ENCODE measurements at regions of chr7 and their contacts with region 1.

Region 1: GRCh38 chr7:46115410-46115809 is 194.3 kb upstream of the IGFBP3 start:
- DNase-seq: no peak
- ATAC-seq: peak in 3 of 4 donors; percentile 36 to 66 (median 62)
- H3K4me3 ChIP-seq: no peak overlapping the region
- H3K27ac ChIP-seq: no peak overlapping the region
- H3K4me1 ChIP-seq: no peaks in the 10 kb centered on the region
- H3K27me3 ChIP-seq: no peaks in the 10 kb centered on the region
- CTCF ChIP-seq: no peak
- POLR2A ChIP-seq: no peak

Region 2: GRCh38 chr7:45663167-45663921 is 452.1 kb before region 1 on chr7:
- intact Hi-C with region 1: no loop called
- DNase-seq: peak in 2 of 5 donors; percentile 26 to 73
- ATAC-seq: peak in 3 of 4 donors; percentile 61 to 68 (median 66)
- H3K4me3 ChIP-seq: no peak overlapping the region
- H3K27ac ChIP-seq: no peak overlapping the region
- H3K4me1 ChIP-seq: no peaks in the 10 kb centered on the region
- H3K27me3 ChIP-seq: no peaks in the 10 kb centered on the region
- CTCF ChIP-seq: peak; percentile 57 to 79 (median 69)
- POLR2A ChIP-seq: no peak

Region 3: DNA sequence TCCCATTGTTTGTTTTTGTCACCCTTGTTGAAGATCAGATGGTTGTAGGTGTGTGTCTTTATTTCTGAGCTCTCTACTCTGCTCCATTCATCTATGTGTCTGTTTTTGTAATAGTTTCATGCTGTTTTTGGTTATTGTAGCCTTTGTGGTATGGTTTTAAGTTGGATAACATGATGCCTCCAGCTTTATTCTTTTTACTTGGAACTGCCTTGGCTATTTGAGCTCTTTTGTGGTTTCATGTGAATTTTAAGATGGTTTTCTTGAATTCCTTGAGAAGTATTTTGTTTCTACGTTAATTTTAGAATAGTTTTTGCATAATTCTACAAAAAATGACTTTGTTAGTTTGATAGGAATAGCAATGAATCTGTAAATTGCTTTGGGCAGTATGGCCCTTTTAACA is 24.3 kb before region 1 on chr7:
- intact Hi-C with region 1: loop called in 1 of 10 experiments (anchors 2 kb)
- DNase-seq: no peak
- ATAC-seq: no peak
- H3K4me3 ChIP-seq: no peak overlapping the region
- H3K27ac ChIP-seq: no peak overlapping the region
- H3K4me1 ChIP-seq: no peaks in the 10 kb centered on the region
- H3K27me3 ChIP-seq: no peaks in the 10 kb centered on the region
- CTCF ChIP-seq: no peak
- POLR2A ChIP-seq: no peak